Astrocyte of the cerebellum (primary cell): ENCODE measurements at regions of chr21 and their contacts with region 1.

Region 1: GRCh38 chr21:44709426-44710293 is 1.7 kb downstream of the TSPEAR start:
- DNase-seq: no peak
- H3K4me3 ChIP-seq: no peak overlapping the region
- CTCF ChIP-seq: no peak

Region 2: DNA sequence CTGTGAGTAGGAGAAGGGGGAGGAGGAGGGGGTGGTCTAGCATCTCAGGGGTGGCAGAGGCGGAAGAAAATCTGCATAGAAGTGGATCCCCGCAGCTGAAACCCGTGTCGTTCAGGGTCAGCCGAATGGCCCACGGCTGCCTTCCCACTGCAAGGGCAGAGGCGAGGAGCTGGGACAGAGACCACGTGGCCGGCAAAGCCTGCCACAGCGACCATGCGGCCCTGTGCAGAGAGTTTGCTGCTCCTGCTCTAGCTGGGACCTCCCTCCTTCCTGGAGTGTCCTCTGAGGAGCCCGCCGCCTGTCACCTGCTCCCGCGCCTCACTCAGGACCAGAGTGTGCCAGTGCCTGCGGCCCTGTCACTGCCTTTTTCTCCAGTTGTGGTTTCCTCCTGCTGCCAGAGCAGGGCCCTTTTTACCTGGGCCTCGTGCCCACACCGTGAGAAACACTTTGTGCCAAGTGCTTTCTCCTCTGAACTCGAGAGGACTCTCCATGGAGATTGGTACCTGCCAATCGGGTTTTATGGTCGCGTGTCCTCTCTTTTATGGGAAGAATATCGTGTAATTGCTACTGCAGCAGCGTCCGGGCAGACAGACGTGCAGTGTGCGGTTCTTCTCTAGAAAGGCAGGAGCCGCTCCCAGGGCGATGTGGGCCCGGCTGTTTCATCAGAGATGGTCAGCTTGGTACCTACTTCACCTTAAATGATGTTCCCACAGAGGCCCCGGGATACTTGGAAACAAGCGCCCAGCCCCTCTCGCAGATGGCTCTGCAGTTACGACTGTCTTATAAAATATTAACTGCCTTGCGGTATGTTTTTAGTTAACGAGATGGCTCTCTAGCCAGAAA is 361.5 kb before region 1 on chr21:
- in situ Hi-C with region 1: loop called (anchors 10 kb)
- DNase-seq: no peak
- H3K4me3 ChIP-seq: no peak overlapping the region
- CTCF ChIP-seq: no peak

Region 3: DNA sequence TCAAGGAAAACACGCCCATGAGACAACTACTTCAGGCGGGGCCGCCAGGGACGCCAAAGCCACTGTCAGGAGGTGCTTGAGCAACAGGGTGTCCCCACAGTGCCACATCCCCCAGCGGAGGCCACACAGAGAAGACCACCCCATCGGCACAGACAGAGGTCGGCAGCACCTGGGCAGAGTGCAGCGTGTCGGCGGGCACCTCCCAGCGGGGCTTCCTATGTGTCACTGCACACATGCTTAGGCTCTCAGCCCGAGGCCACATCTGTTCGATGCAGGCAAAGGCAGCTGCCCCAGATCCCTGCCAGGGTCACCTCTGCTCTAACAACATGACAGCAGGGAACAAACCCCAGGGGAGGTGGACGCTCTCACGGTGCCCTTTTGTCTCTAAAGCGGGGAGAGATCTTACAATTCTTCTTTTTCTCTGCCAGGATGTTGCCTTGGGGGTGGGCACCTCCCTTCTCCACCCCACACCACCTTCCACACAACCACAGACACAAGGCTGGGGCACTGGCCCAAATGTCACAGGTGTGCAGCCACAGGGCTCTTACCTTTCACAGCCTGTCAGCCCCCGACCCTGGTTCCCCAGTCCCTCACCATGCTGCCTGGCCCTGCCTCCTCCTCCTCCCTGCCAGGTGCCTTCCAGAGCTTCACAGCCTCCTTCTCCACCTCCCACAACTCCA is 93.6 kb before region 1 on chr21:
- in situ Hi-C with region 1: no loop called
- DNase-seq: no peak
- H3K4me3 ChIP-seq: no peak overlapping the region
- CTCF ChIP-seq: no peak